ENCODE measurements at regions of chr7 and their contacts with region 1.

Region 1: DNA sequence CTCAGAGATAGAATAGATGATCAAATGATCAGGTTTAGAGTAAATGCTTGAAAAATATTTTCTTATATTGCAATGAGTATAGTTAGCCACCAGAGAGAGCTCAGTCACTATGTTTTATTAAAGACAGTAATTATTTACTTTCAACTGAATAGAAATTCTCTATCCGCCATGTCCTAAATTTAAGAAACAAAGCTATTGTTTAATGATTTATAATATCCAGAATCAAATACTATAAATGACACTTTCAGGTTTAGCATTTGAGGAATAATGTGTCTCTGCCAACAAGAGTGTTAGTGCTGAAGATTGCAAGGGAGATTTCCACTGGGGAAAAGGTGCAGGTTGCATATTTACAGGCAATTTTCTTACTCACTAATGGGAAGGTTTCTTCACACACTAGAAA is 184.7 kb downstream of the DGKB start:
- DNase-seq: no peak
- H3K4me3 Mint-ChIP-seq: no peak overlapping the region
- H3K27ac Mint-ChIP-seq: peak overlapping the region; percentile 15
- H3K4me1 Mint-ChIP-seq: peaks cover 53% of the 10 kb centered on the region
- H3K27me3 Mint-ChIP-seq: no peaks in the 10 kb centered on the region
- CTCF ChIP-seq: peak; percentile 49

Region 2: GRCh38 chr7:14596421-14596820 is 121.4 kb before region 1 on chr7:
- CTCF ChIA-PET with region 1: interaction called, 11 read pairs
- intact Hi-C with region 1: no loop called
- DNase-seq: no peak
- H3K4me3 Mint-ChIP-seq: no peak overlapping the region
- H3K27ac Mint-ChIP-seq: no peak overlapping the region
- H3K4me1 Mint-ChIP-seq: peaks cover 8% of the 10 kb centered on the region
- H3K27me3 Mint-ChIP-seq: no peaks in the 10 kb centered on the region
- CTCF ChIP-seq: no peak

Region 3: GRCh38 chr7:14676896-14677295 is 40.9 kb before region 1 on chr7:
- CTCF ChIA-PET with region 1: no interaction called
- intact Hi-C with region 1: no loop called
- DNase-seq: no peak
- H3K4me3 Mint-ChIP-seq: no peak overlapping the region
- H3K27ac Mint-ChIP-seq: no peak overlapping the region
- H3K4me1 Mint-ChIP-seq: no peaks in the 10 kb centered on the region
- H3K27me3 Mint-ChIP-seq: no peaks in the 10 kb centered on the region
- CTCF ChIP-seq: no peak

Region 4: DNA sequence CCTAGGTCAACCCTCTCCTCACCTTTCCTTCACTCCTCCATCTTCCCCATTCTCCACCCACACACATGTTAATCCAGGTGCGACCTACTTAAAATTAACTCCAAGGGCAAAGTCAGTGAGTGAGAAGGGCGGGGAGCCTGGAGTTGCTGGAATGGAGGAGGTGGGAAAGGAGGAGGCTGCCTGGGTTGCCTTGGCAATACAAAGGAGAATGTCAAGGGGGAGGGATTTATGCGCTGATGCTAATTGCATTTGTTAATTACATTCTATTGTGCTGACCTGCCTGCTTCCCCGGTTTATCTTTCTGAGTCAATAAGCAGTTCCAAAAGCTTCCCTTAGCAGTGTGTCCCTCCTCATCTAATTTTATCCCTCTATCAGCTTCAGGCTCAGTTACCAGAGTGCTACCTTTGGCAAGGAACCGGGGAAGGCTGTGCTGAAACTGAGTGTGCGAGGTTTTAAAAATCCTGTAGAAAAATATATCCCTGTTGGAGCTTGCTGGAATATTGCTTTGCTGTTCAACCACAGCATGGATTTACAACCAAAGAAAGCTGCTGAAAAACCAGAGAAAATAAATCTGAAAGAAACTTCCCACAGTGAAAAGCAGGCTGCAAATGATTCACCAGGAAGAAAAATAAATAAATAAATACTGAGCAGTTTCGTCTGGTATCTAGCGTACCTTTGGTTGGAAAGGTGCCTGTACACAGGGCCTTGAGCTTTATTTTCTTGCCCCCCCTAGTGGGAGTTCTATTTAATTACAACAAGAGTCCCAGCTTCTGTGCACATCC is 297.9 kb after region 1 on chr7:
- CTCF ChIA-PET with region 1: interaction called, 55 read pairs
- intact Hi-C with region 1: loop called (anchors 1 kb)
- DNase-seq: peak; percentile 76
- H3K4me3 Mint-ChIP-seq: peak overlapping the region; percentile 39
- H3K27ac Mint-ChIP-seq: peak overlapping the region; percentile 27
- H3K4me1 Mint-ChIP-seq: peaks cover 17% of the 10 kb centered on the region
- H3K27me3 Mint-ChIP-seq: no peaks in the 10 kb centered on the region
- CTCF ChIP-seq: peak; percentile 75

Region 5: DNA sequence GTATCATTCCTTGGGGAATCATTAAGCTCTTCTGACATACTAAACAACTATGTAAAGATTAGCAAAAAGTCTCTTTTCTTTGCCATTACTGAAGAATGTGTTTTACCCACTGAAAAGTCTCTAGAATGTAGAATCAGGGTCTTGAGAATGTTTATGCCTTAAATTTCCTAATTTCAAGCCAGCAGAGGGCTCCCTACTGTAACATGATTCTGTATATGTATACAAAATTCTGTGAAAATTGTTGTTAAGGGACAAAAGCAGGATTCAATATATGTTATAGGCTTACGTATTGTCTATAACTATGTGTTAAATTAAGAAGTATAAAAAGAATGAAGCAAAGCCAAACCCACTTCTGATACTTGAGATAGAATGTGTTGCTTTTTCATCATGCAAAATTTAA is 481.7 kb after region 1 on chr7:
- CTCF ChIA-PET with region 1: no interaction called
- intact Hi-C with region 1: loop called (anchors 5 kb)
- DNase-seq: no peak
- H3K4me3 Mint-ChIP-seq: no peak overlapping the region
- H3K27ac Mint-ChIP-seq: no peak overlapping the region
- H3K4me1 Mint-ChIP-seq: peaks cover 12% of the 10 kb centered on the region
- H3K27me3 Mint-ChIP-seq: no peaks in the 10 kb centered on the region
- CTCF ChIP-seq: peak; percentile 41

Region 6: DNA sequence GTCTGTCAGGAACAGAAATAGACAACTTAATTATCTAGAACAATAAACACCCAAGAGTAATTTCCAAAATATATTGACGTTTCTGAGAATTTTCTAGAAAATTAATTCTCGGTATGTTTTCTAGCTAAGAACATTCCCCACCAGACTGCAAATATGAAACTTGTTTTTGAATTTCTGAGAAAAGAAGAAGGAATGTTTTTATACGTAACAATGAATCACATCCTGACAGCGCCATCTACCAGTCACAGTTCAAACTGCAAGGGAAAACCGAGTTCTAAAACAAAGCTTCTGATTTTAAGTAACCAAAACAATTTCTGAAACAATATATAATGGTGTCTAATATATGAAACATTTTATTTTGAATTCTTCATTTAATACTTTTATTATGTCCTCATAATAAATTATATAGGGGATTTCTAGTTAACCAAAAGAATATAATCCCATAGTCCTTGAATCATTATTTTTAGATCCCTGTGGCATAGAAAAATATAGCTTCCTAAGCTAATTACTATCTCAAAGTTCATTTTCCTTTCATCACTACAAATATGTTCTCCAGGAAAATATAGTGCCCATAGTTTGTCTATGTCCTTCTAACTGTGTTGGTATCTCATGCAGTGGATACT is 1003.1 kb after region 1 on chr7:
- CTCF ChIA-PET with region 1: interaction called, 4 read pairs
- intact Hi-C with region 1: loop called (anchors 10 kb)
- DNase-seq: peak; percentile 62
- H3K4me3 Mint-ChIP-seq: no peak overlapping the region
- H3K27ac Mint-ChIP-seq: no peak overlapping the region
- H3K4me1 Mint-ChIP-seq: peaks cover 22% of the 10 kb centered on the region
- H3K27me3 Mint-ChIP-seq: no peaks in the 10 kb centered on the region
- CTCF ChIP-seq: peak; percentile 85

Measured in Calu3 (cell line).